ENCODE measurements at regions of chr13 and their contacts with region 1.

Region 1: GRCh38 chr13:97986835-97987234 is 33.4 kb downstream of the IPO5 start:
- DNase-seq: no peak
- H3K4me3 Mint-ChIP-seq: no peak overlapping the region
- H3K27ac Mint-ChIP-seq: peak overlapping the region; percentile 19
- H3K4me1 Mint-ChIP-seq: peaks cover 6% of the 10 kb centered on the region
- H3K27me3 Mint-ChIP-seq: no peaks in the 10 kb centered on the region

Region 2: DNA sequence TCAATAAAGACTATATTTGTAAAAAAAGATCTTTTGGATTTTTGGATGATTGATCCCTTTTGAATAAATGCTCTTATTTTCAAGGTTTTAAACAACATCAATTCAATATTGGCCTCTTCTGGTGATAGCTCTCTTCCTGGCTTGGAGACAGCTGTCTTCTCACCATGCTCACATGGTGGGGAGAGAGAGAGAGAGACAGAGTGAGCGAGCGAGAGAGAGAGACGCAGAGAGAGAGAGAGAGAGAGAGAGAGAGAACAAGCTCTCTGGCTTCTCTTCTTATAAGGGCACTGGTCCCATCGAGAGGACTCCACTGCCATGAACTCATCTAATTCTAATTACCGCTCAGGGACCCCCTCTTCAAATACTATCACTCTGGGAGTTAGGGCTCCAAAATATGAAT is 123.9 kb after region 1 on chr13:
- CTCF ChIA-PET with region 1: no interaction called
- POLR2A ChIA-PET with region 1: interaction called, 10 read pairs
- DNase-seq: no peak
- H3K4me3 Mint-ChIP-seq: no peak overlapping the region
- H3K27ac Mint-ChIP-seq: no peak overlapping the region
- H3K4me1 Mint-ChIP-seq: no peaks in the 10 kb centered on the region
- H3K27me3 Mint-ChIP-seq: no peaks in the 10 kb centered on the region